ENCODE measurements at regions of chr1 and their contacts with region 1.

Region 1: DNA sequence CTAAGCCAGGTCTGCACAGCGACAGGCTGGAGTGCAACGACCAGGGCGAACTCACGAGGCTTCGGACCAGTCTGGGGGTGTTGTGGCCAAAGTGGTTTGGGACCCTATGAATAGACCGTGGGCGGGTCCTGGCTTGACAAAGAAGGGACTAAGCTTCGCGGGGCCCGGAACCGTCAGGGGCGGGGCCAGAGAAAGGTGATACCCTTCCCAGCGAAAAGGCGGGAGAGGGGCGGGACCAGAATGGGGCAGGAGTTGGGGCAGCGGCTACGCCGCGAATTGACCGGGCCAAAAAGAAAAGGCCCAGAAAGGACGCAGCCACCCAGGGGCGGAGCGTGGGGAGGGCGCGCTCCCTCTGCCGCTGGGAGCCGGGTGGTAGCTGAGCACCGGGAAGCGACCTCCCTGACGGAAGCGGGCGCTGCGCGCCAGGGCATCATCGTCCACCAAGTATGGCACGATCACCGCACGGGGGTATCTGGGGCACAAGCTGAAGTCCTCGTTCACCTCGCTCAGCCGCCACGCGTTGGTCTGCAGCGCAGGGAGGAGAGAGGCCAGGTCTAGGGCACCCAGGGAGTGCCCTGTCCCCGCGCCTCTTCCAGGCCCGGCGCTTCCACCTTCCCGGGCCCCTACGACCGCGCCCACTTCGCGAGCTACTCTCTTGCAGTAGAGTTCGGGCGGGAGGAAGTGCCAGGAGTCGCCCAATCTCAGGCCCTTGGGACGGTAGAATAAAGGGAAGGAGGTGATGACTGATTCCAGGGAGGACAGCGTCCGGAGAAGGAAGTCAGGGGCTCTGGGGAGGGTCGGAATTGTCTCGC is 6.7 kb upstream of the FAM167B start:
- DNase-seq: peak; percentile 30
- H3K4me3 ChIP-seq: peak overlapping the region; percentile 42 to 57 (median 57)
- H3K27ac ChIP-seq: no peak overlapping the region
- H3K4me1 ChIP-seq: peaks cover 35% of the 10 kb centered on the region
- H3K27me3 ChIP-seq: no peaks in the 10 kb centered on the region
- CTCF ChIP-seq: peak; percentile 8 to 18

Region 2: DNA sequence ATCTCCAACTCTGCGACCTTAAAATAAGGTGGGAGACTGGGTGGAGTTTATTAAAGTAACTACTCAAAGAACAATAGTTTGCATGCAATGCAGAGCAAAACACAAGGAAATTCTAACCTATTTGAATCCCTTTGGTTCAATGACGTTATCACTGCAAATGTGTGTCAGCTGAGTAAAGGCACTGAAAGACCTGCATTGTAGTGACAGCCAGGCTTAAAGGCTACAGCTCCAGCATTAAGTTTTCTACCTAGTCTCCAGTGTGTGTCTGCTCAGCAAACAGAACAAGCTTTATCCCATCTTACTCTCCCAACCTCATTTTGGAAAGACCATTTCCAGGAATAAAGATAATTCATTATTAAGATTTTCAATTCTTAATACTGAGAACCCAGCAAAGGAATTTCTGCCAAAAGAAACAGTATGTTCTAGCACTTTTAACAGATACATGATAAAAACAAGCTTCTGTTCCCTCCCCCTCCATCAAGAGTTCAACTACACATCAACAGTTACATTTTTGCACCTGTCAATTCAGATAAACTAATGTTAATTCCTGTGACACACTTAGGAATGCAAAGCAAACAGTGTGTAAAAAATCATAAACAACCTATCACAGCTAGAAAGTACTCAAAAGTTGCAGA is 316.3 kb before region 1 on chr1:
- CTCF ChIA-PET with region 1: interaction called, 10 read pairs
- dilution Hi-C with region 1: no loop called
- in situ Hi-C with region 1: no loop called
- intact Hi-C with region 1: no loop called
- DNase-seq: no peak
- H3K4me3 ChIP-seq: no peak overlapping the region
- H3K27ac ChIP-seq: no peak overlapping the region
- H3K4me1 ChIP-seq: no peaks in the 10 kb centered on the region
- H3K27me3 ChIP-seq: no peaks in the 10 kb centered on the region
- CTCF ChIP-seq: no peak

Region 3: GRCh38 chr1:32221980-32222755 is 18.2 kb before region 1 on chr1 and contains the starts of genes EIF3I and TMEM234:
- CTCF ChIA-PET with region 1: interaction called, 12 read pairs
- dilution Hi-C with region 1: no loop called
- in situ Hi-C with region 1: no loop called
- intact Hi-C with region 1: loop called (anchors 2 kb)
- DNase-seq: peak; percentile 86
- H3K4me3 ChIP-seq: peak within 1 kb of the TSS; percentile 52 to 69 (median 64)
- H3K27ac ChIP-seq: peak within 1 kb of the TSS; percentile 95
- H3K4me1 ChIP-seq: peaks cover 11% of the 10 kb centered on the region
- H3K27me3 ChIP-seq: no peaks in the 10 kb centered on the region
- CTCF ChIP-seq: no peak
- total RNA-seq, gene EIF3I: 230 to 277 TPM
- total RNA-seq, gene TMEM234: 18.2 to 24.4 TPM

Region 4: GRCh38 chr1:32335790-32336590 is 95.6 kb after region 1 on chr1 and contains the start of gene MARCKSL1:
- CTCF ChIA-PET with region 1: no interaction called
- dilution Hi-C with region 1: no loop called
- in situ Hi-C with region 1: no loop called
- intact Hi-C with region 1: loop called (anchors 5 kb)
- DNase-seq: peak; percentile 34
- H3K4me3 ChIP-seq: peak within 1 kb of the TSS; percentile 1 to 54 (median 50)
- H3K27ac ChIP-seq: no peak within 1 kb of the TSS
- H3K4me1 ChIP-seq: peaks cover 49% of the 10 kb centered on the region
- H3K27me3 ChIP-seq: no peaks in the 10 kb centered on the region
- CTCF ChIP-seq: no peak
- total RNA-seq, gene MARCKSL1: 13.0 to 16.1 TPM

Measured in mammary epithelial cell (primary cell).